ENCODE measurements at regions of chr19 and their contacts with region 1.

Region 1: DNA sequence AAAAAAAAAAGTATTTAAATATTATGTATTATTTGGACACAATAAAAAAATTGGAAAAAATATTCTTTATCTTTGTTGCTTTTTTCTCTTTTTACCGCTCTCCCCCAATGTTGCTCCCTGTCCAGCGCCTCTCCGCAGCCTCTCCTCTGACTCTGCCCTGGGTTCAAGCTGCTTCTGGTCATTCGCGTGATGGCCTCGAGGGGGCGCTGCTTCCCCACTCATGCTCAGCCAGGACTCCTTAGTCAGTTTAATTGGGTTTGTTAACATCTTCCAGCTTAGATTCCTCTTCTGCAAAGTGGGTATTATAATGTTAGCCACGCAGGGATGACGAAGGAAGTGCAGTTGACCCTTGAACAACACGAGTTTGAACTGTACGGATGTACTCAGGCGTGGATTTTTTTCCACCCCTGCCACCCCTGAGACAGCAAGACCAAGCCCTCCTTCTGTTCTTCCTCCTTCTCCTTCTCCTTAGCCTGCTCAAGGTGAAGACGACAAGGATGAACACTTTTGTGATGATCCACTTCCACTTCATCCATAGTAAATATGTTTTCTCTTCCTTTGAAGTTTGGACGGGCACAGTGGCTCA is 4.9 kb upstream of the NWD1 start:
- DNase-seq: peak; percentile 89

Region 2: GRCh38 chr19:16528073-16528472 is 186.7 kb before region 1 on chr19:
- intact Hi-C with region 1: loop called in 1 of 2 experiments (anchors 5 kb)
- DNase-seq: no peak

Region 3: GRCh38 chr19:17052439-17053210 is 337.8 kb after region 1 on chr19:
- intact Hi-C with region 1: loop called in 1 of 2 experiments (anchors 10 kb)
- DNase-seq: no peak

Measured in posterior vena cava (tissue), 2 donors.